AG04450 (cell line): ENCODE measurements at regions of chr17 and their contacts with region 1.

Region 1: DNA sequence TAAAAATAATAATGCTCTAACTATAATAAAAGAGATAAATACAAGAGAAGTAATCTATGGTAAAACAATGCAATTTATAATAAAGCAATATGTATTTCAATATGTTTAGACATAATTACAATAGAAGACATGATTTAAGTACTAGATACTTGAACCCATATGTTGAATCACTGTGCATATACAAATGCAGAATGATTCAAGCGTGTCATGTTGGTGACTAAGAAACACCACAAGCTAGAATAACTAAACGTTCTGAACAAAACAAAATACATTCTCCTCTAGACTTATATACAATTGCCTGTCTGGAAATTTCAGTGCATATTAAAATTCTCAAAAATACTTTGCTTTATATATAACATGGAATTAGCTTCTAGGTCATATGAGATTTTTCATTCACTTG is 11.2 kb downstream of the TADA2A start:
- DNase-seq: no peak
- H3K4me3 ChIP-seq: no peak overlapping the region
- H3K27ac ChIP-seq: no peak overlapping the region
- H3K27me3 ChIP-seq: no peaks in the 10 kb centered on the region
- CTCF ChIP-seq: no peak

Region 2: DNA sequence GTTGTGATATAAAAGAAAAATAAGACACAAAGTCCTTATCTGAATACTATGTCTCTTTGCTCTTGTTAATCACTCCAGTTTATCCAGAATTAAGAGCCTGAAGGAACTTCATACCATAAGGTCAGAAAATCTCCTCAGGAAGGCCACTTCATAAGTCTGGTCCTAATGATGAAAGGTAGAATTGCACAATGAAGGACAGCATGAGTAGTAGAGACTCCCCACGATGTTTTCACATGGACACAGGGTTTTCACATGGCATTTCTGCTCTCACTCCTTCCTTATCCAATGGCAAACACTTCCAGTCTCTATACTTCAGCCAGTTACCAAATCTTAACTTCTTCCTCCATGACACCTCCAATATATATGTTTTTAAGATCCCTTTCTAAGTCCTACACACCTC is 52.3 kb before region 1 on chr17:
- CTCF ChIA-PET with region 1: no interaction called
- POLR2A ChIA-PET with region 1: no interaction called
- DNase-seq: no peak
- H3K4me3 ChIP-seq: no peak overlapping the region
- H3K27ac ChIP-seq: no peak overlapping the region
- H3K27me3 ChIP-seq: no peaks in the 10 kb centered on the region
- CTCF ChIP-seq: no peak

Region 3: GRCh38 chr17:37430051-37430627 is 12.3 kb after region 1 on chr17:
- CTCF ChIA-PET with region 1: no interaction called
- POLR2A ChIA-PET with region 1: no interaction called
- DNase-seq: no peak
- H3K4me3 ChIP-seq: no peak overlapping the region
- H3K27ac ChIP-seq: no peak overlapping the region
- H3K27me3 ChIP-seq: no peaks in the 10 kb centered on the region
- CTCF ChIP-seq: no peak

Region 4: GRCh38 chr17:37505333-37505732 is 87.5 kb after region 1 on chr17:
- CTCF ChIA-PET with region 1: no interaction called
- POLR2A ChIA-PET with region 1: no interaction called
- DNase-seq: no peak
- H3K4me3 ChIP-seq: no peak overlapping the region
- H3K27ac ChIP-seq: no peak overlapping the region
- H3K27me3 ChIP-seq: no peaks in the 10 kb centered on the region
- CTCF ChIP-seq: no peak

Region 5: GRCh38 chr17:37516127-37516571 is 98.3 kb after region 1 on chr17:
- CTCF ChIA-PET with region 1: interaction called, 10 read pairs
- POLR2A ChIA-PET with region 1: no interaction called
- DNase-seq: no peak
- H3K4me3 ChIP-seq: no peak overlapping the region
- H3K27ac ChIP-seq: no peak overlapping the region
- H3K27me3 ChIP-seq: no peaks in the 10 kb centered on the region
- CTCF ChIP-seq: no peak

Region 6: GRCh38 chr17:37592291-37592690 is 174.4 kb after region 1 on chr17:
- CTCF ChIA-PET with region 1: no interaction called
- POLR2A ChIA-PET with region 1: no interaction called
- DNase-seq: no peak
- H3K4me3 ChIP-seq: no peak overlapping the region
- H3K27ac ChIP-seq: no peak overlapping the region
- H3K27me3 ChIP-seq: no peaks in the 10 kb centered on the region
- CTCF ChIP-seq: no peak